ENCODE measurements at regions of chr1 and their contacts with region 1.

Region 1: GRCh38 chr1:44213222-44214112 is at the start of gene DMAP1:
- DNase-seq: peak; percentile 89
- H3K4me3 Mint-ChIP-seq: peak within 1 kb of the TSS; percentile 87
- H3K27ac Mint-ChIP-seq: peak within 1 kb of the TSS; percentile 86
- H3K4me1 Mint-ChIP-seq: peaks cover 27% of the 10 kb centered on the region
- H3K27me3 Mint-ChIP-seq: no peaks in the 10 kb centered on the region
- total RNA-seq, gene DMAP1: 35.3 to 41.0 TPM

Region 2: GRCh38 chr1:43706598-43707495 is 506.6 kb before region 1 on chr1:
- CTCF ChIA-PET with region 1: no interaction called
- intact Hi-C with region 1: loop called (anchors 1 kb)
- DNase-seq: peak; percentile 94
- H3K4me3 Mint-ChIP-seq: peak overlapping the region; percentile 86
- H3K27ac Mint-ChIP-seq: peak overlapping the region; percentile 53
- H3K4me1 Mint-ChIP-seq: peaks cover 30% of the 10 kb centered on the region
- H3K27me3 Mint-ChIP-seq: no peaks in the 10 kb centered on the region

Region 3: DNA sequence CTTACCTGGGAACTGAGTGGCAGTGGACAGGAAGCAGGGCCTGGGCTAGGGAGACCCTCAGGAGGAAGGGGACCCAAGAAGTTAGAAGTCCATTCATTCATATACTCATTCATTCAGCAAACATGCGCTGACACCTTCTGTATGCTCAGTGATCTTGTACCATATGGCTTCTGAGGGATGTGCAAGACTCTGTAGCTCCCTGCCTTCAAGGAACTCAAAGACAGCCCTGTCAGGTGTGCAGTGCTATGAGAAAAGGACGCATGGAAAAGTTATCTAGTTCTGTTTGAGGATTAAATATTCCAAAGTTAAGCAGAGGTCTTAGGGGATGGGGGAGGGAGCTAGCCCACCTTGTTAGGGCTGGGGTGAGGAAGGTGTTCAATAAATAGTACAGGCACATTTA is 12.3 kb after region 1 on chr1:
- CTCF ChIA-PET with region 1: interaction called, 10 read pairs
- intact Hi-C with region 1: no loop called
- DNase-seq: no peak
- H3K4me3 Mint-ChIP-seq: no peak overlapping the region
- H3K27ac Mint-ChIP-seq: no peak overlapping the region
- H3K4me1 Mint-ChIP-seq: peaks cover 15% of the 10 kb centered on the region
- H3K27me3 Mint-ChIP-seq: no peaks in the 10 kb centered on the region

Region 4: GRCh38 chr1:44254392-44254910 is 41.0 kb after region 1 on chr1:
- CTCF ChIA-PET with region 1: no interaction called
- intact Hi-C with region 1: loop called (anchors 2 kb)
- DNase-seq: peak; percentile 66
- H3K4me3 Mint-ChIP-seq: no peak overlapping the region
- H3K27ac Mint-ChIP-seq: no peak overlapping the region
- H3K4me1 Mint-ChIP-seq: no peaks in the 10 kb centered on the region
- H3K27me3 Mint-ChIP-seq: no peaks in the 10 kb centered on the region

Region 5: GRCh38 chr1:44318097-44319088 is 104.9 kb after region 1 on chr1:
- CTCF ChIA-PET with region 1: interaction called, 34 read pairs
- intact Hi-C with region 1: loop called (anchors 1 kb)
- DNase-seq: peak; percentile 75
- H3K4me3 Mint-ChIP-seq: no peak overlapping the region
- H3K27ac Mint-ChIP-seq: peak overlapping the region; percentile 34
- H3K4me1 Mint-ChIP-seq: peaks cover 11% of the 10 kb centered on the region
- H3K27me3 Mint-ChIP-seq: no peaks in the 10 kb centered on the region

Region 6: GRCh38 chr1:44594871-44595746 is 381.6 kb after region 1 on chr1:
- CTCF ChIA-PET with region 1: interaction called, 14 read pairs
- intact Hi-C with region 1: loop called (anchors 1 kb)
- DNase-seq: peak; percentile 88
- H3K4me3 Mint-ChIP-seq: no peak overlapping the region
- H3K27ac Mint-ChIP-seq: no peak overlapping the region
- H3K4me1 Mint-ChIP-seq: no peaks in the 10 kb centered on the region
- H3K27me3 Mint-ChIP-seq: peaks cover 2% of the 10 kb centered on the region

Measured in activated naive CD4-positive, alpha-beta T cell treated with anti-CD3 and anti-CD28 coated beads for 36 hours (primary cell).